Panc1 (cell line): ENCODE measurements at regions of chr2 and their contacts with region 1.

Region 1: DNA sequence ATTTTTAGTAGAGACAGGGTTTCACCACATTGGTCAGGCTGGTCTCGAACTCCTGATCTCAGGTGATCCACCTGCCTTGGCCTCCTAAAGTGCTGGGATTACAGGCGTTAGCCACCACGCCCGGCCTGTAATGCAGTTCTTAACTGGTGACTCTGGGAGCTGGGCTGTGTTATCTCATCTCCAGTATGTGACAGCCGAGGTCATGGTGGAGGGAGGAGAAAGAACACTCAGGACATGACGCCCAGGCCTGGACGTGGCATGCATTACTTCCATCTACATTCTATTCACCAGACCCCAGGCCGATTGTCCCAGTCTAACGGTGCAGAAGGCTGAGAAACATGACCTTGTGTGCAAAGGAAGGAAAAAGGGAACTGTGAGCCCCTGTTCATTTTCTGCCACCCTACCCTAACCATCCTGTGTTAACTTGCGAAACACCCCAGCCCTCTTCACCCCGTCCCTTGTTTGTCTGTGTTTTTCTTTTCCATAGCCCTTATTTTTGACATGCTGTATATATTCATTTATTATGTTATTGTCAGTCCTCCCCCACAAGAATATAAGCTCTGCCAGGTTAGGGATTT is 88.1 kb upstream of the ASAP2 start:
- DNase-seq: no peak
- ATAC-seq: no peak
- H3K4me3 ChIP-seq: no peak overlapping the region
- H3K27ac ChIP-seq: no peak overlapping the region
- H3K4me1 ChIP-seq: no peaks in the 10 kb centered on the region
- H3K27me3 ChIP-seq: no peaks in the 10 kb centered on the region
- CTCF ChIP-seq: no peak

Region 2: DNA sequence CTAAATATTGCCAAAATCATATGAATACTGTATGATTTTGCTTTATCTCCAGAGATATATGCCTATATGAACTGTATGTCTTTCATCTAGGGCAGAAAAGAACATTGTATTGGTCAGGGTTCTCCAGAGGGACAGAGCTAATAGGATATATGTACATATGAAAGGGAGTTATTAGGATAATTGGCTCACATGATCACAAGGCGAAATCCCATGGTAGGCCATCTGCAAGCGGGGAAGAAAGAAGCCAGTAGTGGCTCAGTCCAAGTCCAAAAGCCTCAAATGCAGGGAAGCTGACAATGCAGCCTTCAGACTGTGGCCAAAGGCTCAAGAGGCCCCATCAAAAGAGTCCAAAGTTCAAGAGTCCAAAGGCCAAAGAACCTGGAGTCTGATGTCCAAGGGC is 1991.3 kb before region 1 on chr2:
- CTCF ChIA-PET with region 1: no interaction called
- POLR2A ChIA-PET with region 1: interaction called, 13 read pairs
- in situ Hi-C with region 1: no loop called
- intact Hi-C with region 1: no loop called
- DNase-seq: no peak
- ATAC-seq: no peak
- H3K4me3 ChIP-seq: no peak overlapping the region
- H3K27ac ChIP-seq: no peak overlapping the region
- H3K4me1 ChIP-seq: no peaks in the 10 kb centered on the region
- H3K27me3 ChIP-seq: no peaks in the 10 kb centered on the region
- CTCF ChIP-seq: no peak

Region 3: DNA sequence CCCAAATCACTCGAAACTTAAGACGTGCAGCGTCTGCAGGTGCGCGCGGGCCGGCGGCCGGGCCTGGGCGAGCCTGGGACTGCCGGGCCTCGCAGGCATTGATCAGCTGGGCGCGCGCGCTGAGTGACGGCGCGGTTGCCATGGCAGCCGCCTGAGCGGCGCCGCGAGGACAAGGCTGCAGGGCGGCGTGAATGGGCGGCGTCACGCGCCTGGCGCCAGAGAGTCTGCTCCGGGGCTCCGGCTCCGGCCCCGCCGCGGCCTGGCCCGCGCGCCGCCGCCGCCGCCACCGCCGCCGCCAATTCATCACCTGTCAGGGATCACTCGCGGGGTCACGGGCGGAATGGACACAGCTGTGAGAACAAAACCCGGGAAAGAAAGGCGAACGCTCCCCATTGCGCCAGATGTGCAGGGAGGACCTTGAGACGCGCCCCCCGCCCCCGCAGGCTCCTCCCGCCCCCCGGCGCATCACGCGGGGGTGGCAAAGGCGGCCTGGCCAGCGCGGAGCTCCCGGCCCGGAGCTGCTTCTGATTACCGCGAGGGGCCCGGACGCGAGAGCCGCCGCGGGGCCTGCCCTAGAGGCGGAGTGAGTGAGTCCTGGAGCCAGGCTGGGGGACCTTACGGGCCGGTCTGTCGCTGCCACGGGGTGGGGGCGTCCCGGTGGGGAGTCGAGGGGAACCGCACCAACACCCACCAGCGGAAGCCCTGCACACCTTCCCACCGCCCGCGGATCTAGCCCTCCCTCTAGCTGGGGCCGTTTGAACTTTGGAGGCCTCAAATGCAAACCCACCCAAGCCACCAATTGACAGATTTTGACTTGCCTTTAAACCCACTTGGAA is 439.5 kb before region 1 on chr2:
- CTCF ChIA-PET with region 1: no interaction called
- POLR2A ChIA-PET with region 1: no interaction called
- in situ Hi-C with region 1: no loop called
- intact Hi-C with region 1: no loop called
- DNase-seq: no peak
- ATAC-seq: peak; percentile 86
- H3K4me3 ChIP-seq: peak overlapping the region; percentile 55 to 72
- H3K27ac ChIP-seq: peak overlapping the region; percentile 89
- H3K4me1 ChIP-seq: peaks cover 31% of the 10 kb centered on the region
- H3K27me3 ChIP-seq: no peaks in the 10 kb centered on the region; the same call in 1 of the 2 replicates
- CTCF ChIP-seq: no peak; the same call in 1 of the 2 replicates

Region 4: DNA sequence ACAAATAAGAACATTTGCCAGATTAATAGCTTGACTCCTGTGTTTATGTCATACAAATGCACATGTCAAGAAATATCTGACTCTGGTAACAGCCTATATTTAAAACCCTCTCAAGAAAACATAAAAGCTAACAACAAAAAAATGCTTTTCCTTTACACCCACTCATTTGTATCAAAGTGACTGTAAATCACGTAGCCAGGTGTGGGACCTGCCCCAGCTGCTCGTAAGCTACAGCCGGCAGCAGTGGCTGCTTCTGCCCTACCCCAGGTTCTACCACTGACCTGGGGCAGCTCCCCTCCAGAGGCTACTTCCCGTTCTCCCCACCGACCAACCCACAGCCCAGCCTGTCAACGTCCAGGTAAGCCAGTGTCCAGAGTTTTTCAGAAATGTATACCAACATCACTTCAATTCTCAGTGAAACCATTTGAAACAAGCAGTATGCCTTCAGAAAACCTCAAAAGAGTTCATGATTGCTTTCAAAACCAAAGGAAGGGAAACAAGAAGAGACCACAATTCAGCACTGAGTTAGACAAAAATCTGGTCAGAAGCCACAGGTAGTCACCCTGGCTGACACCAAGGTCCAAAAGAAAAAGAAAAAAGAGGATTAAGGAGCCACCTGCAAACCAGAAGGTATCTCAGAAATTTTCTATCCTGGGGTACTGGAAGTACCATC is 321.5 kb before region 1 on chr2:
- CTCF ChIA-PET with region 1: no interaction called
- POLR2A ChIA-PET with region 1: no interaction called
- in situ Hi-C with region 1: no loop called
- intact Hi-C with region 1: no loop called
- DNase-seq: no peak
- ATAC-seq: no peak
- H3K4me3 ChIP-seq: no peak overlapping the region
- H3K27ac ChIP-seq: no peak overlapping the region
- H3K4me1 ChIP-seq: no peaks in the 10 kb centered on the region
- H3K27me3 ChIP-seq: no peaks in the 10 kb centered on the region
- CTCF ChIP-seq: no peak

Region 5: GRCh38 chr2:9251154-9252001 is 132.9 kb after region 1 on chr2:
- CTCF ChIA-PET with region 1: no interaction called
- POLR2A ChIA-PET with region 1: no interaction called
- in situ Hi-C with region 1: no loop called
- intact Hi-C with region 1: no loop called
- DNase-seq: no peak
- ATAC-seq: peak; percentile 66
- H3K4me3 ChIP-seq: peak overlapping the region in 1 of 2 experiments; percentile 30; a peak in 2 of 4 replicates
- H3K27ac ChIP-seq: peak overlapping the region; percentile 100
- H3K4me1 ChIP-seq: peaks cover 88% of the 10 kb centered on the region
- H3K27me3 ChIP-seq: no peaks in the 10 kb centered on the region
- CTCF ChIP-seq: no peak